CD4-positive, alpha-beta T cell (primary cell): ENCODE measurements at regions of chr2 and their contacts with region 1.

Region 1: GRCh38 chr2:197198890-197199289 is 111.7 kb downstream of the ANKRD44 start:
- DNase-seq: peak; percentile 75 to 98 (median 83)
- ATAC-seq: peak; percentile 82
- H3K4me3 ChIP-seq: peak overlapping the region; percentile 57
- H3K4me3 Mint-ChIP-seq: peak overlapping the region; percentile 89
- H3K27ac ChIP-seq: peak overlapping the region; percentile 77 to 84
- H3K27ac Mint-ChIP-seq: peak overlapping the region; percentile 98
- H3K4me1 ChIP-seq: peaks cover 70% of the 10 kb centered on the region
- H3K4me1 Mint-ChIP-seq: peaks cover 92% of the 10 kb centered on the region
- H3K27me3 ChIP-seq: no peaks in the 10 kb centered on the region
- H3K27me3 Mint-ChIP-seq: no peaks in the 10 kb centered on the region
- CTCF ChIP-seq: no peak

Region 2: DNA sequence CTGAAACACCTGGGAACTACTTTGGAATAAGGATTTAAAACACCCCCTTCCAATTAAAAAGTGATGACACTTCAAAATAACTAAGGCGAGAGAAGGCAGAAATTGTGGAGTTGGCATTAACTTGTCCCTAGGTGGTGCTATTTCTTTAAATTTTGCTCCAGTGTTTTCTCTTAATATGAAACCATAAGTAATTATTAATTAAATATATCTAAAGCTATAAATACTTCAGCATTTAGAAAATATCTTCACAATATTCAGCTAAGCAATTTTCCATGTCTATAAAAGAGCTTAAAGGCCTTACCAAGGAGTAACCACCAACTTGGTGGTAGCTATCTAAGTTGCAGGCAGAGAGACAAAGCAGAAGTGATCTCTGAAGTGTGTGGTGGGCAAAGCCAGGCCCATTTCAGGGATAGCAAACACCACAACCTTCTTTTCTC is 85.6 kb before region 1 on chr2:
- CTCF ChIA-PET with region 1: interaction called, 7 read pairs
- POLR2A ChIA-PET with region 1: interaction called, 13 read pairs
- intact Hi-C with region 1: no loop called
- DNase-seq: peak in 3 of 14 experiments; percentile 56 to 70 (median 69)
- ATAC-seq: peak; percentile 60
- H3K4me3 ChIP-seq: no peak overlapping the region
- H3K4me3 Mint-ChIP-seq: no peak overlapping the region
- H3K27ac ChIP-seq: peak overlapping the region in 1 of 2 donors; percentile 38
- H3K27ac Mint-ChIP-seq: peak overlapping the region; percentile 83
- H3K4me1 ChIP-seq: peaks cover 1% of the 10 kb centered on the region
- H3K4me1 Mint-ChIP-seq: peaks cover 36% of the 10 kb centered on the region
- H3K27me3 ChIP-seq: no peaks in the 10 kb centered on the region
- H3K27me3 Mint-ChIP-seq: no peaks in the 10 kb centered on the region
- CTCF ChIP-seq: peak; percentile 81

Region 3: GRCh38 chr2:197209742-197210408 is 11.0 kb after region 1 on chr2:
- CTCF ChIA-PET with region 1: interaction called, 6 read pairs
- POLR2A ChIA-PET with region 1: interaction called, 216 read pairs
- intact Hi-C with region 1: loop called in 1 of 2 experiments (anchors 1 kb)
- DNase-seq: peak in 7 of 14 experiments; percentile 25 to 79 (median 45)
- ATAC-seq: peak; percentile 8
- H3K4me3 ChIP-seq: peak overlapping the region; percentile 15
- H3K4me3 Mint-ChIP-seq: peak overlapping the region; percentile 73
- H3K27ac ChIP-seq: peak overlapping the region; percentile 79 to 86
- H3K27ac Mint-ChIP-seq: peak overlapping the region; percentile 98
- H3K4me1 ChIP-seq: peaks cover 86% of the 10 kb centered on the region
- H3K4me1 Mint-ChIP-seq: peaks cover 98% of the 10 kb centered on the region
- H3K27me3 ChIP-seq: no peaks in the 10 kb centered on the region
- H3K27me3 Mint-ChIP-seq: no peaks in the 10 kb centered on the region
- CTCF ChIP-seq: no peak

Region 4: GRCh38 chr2:197229509-197230443 is 30.9 kb after region 1 on chr2:
- CTCF ChIA-PET with region 1: interaction called, 3 read pairs
- POLR2A ChIA-PET with region 1: interaction called, 18 read pairs
- intact Hi-C with region 1: no loop called
- DNase-seq: no peak
- ATAC-seq: no peak
- H3K4me3 ChIP-seq: no peak overlapping the region
- H3K4me3 Mint-ChIP-seq: peak overlapping the region; percentile 36
- H3K27ac ChIP-seq: no peak overlapping the region
- H3K27ac Mint-ChIP-seq: peak overlapping the region; percentile 91
- H3K4me1 ChIP-seq: peaks cover 76% of the 10 kb centered on the region
- H3K4me1 Mint-ChIP-seq: peaks cover 96% of the 10 kb centered on the region
- H3K27me3 ChIP-seq: no peaks in the 10 kb centered on the region
- H3K27me3 Mint-ChIP-seq: no peaks in the 10 kb centered on the region
- CTCF ChIP-seq: no peak

Region 5: DNA sequence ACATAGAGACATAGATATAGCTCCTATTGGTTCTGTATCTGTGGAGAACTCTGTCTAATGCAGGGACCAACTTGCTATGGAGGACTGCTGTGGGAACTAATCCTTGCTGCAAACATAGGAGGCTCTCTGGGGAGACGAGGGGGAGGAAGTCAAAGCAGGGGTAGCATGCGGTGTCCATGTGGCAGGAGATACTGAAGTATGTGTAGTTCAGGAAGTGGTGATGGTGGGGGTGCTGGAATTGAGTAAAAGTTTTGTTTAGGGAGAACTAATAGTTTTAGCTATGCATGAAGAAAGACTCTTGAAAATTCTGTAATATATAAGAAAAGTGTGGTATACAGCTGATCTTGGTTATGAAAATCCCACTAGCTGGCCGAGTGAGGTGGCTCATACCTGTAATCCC is 49.7 kb after region 1 on chr2:
- CTCF ChIA-PET with region 1: interaction called, 3 read pairs
- POLR2A ChIA-PET with region 1: interaction called, 25 read pairs
- intact Hi-C with region 1: no loop called
- DNase-seq: peak in 5 of 14 experiments; percentile 23 to 69 (median 51)
- ATAC-seq: peak; percentile 82
- H3K4me3 ChIP-seq: no peak overlapping the region
- H3K4me3 Mint-ChIP-seq: peak overlapping the region; percentile 72
- H3K27ac ChIP-seq: peak overlapping the region in 1 of 2 donors; percentile 39
- H3K27ac Mint-ChIP-seq: peak overlapping the region; percentile 94
- H3K4me1 ChIP-seq: peaks cover 59% of the 10 kb centered on the region
- H3K4me1 Mint-ChIP-seq: peaks cover 90% of the 10 kb centered on the region
- H3K27me3 ChIP-seq: no peaks in the 10 kb centered on the region
- H3K27me3 Mint-ChIP-seq: no peaks in the 10 kb centered on the region
- CTCF ChIP-seq: no peak

Region 6: GRCh38 chr2:197261808-197262226 is 62.9 kb after region 1 on chr2:
- CTCF ChIA-PET with region 1: no interaction called
- POLR2A ChIA-PET with region 1: interaction called, 30 read pairs
- intact Hi-C with region 1: no loop called
- DNase-seq: peak in 2 of 14 experiments; percentile 49 to 52
- ATAC-seq: peak; percentile 38
- H3K4me3 ChIP-seq: no peak overlapping the region
- H3K4me3 Mint-ChIP-seq: peak overlapping the region; percentile 66
- H3K27ac ChIP-seq: peak overlapping the region; percentile 54 to 59
- H3K27ac Mint-ChIP-seq: peak overlapping the region; percentile 78
- H3K4me1 ChIP-seq: peaks cover 69% of the 10 kb centered on the region
- H3K4me1 Mint-ChIP-seq: peaks cover 85% of the 10 kb centered on the region
- H3K27me3 ChIP-seq: no peaks in the 10 kb centered on the region
- H3K27me3 Mint-ChIP-seq: no peaks in the 10 kb centered on the region
- CTCF ChIP-seq: no peak

Region 7: DNA sequence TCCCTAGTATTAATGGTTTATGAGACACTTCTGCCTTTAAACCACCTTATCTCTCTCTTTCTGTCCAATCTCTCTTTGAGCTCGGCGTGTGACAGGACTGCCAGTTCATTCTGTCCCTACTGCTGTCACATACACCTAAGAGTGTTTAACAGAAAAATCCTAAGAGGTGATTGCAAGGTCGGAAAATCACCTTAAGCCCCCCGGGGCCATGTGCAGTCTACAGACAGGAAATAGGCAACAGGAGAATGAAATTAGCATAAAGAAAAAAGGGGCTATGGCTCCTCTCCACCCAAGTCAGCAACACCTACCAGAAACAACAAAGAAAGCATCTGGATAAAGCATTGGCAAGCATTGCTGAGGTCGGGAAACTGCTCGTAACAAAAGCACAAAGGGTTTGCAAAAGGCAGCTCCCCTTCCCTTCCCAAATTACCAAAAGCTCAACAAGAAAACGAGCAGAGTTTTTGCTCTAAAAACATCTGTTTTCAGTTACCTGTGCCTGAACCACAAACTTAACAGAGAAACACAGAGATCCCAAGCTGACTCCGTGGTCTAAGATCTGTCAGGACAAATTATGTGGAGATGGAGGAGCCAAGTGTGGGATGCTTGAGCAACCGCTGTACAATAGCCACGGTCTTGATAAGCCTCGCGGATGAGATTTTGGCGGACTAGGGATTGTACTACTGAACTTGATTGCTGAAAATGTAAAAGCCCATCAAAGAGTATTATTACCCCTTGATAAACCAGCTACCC is 81.3 kb after region 1 on chr2:
- CTCF ChIA-PET with region 1: no interaction called
- POLR2A ChIA-PET with region 1: interaction called, 10 read pairs
- intact Hi-C with region 1: no loop called
- DNase-seq: no peak
- ATAC-seq: peak; percentile 67
- H3K4me3 ChIP-seq: no peak overlapping the region
- H3K4me3 Mint-ChIP-seq: peak overlapping the region; percentile 30
- H3K27ac ChIP-seq: peak overlapping the region; percentile 33 to 46
- H3K27ac Mint-ChIP-seq: peak overlapping the region; percentile 80
- H3K4me1 ChIP-seq: peaks cover 83% of the 10 kb centered on the region
- H3K4me1 Mint-ChIP-seq: peaks cover 86% of the 10 kb centered on the region
- H3K27me3 ChIP-seq: no peaks in the 10 kb centered on the region
- H3K27me3 Mint-ChIP-seq: no peaks in the 10 kb centered on the region
- CTCF ChIP-seq: no peak